ENCODE measurements at regions of chr5 and their contacts with region 1.

Region 1: DNA sequence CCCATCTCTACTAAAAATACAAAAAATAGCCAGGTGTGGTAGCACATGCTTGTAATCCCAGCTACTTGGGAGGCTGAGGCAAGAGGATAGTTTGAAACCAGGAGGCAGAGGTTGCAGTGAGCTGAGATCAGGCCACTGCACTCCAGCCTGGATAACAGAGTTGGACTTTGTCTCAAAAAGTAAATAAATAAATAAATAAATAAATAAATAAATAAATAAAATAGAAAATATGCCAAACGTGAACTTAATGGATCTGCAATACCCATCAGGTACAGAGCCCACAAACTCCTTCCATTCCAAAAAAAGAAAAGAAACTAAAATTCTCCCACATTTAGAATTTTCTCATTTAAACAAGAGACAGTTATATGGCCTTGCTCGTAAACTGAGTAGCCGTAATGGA is 702.7 kb downstream of the CDH18 start:
- DNase-seq: no peak
- ATAC-seq: no peak
- H3K4me3 ChIP-seq: no peak overlapping the region
- H3K27ac ChIP-seq: no peak overlapping the region
- H3K4me1 ChIP-seq: no peaks in the 10 kb centered on the region
- H3K27me3 ChIP-seq: no peaks in the 10 kb centered on the region
- CTCF ChIP-seq: no peak

Region 2: DNA sequence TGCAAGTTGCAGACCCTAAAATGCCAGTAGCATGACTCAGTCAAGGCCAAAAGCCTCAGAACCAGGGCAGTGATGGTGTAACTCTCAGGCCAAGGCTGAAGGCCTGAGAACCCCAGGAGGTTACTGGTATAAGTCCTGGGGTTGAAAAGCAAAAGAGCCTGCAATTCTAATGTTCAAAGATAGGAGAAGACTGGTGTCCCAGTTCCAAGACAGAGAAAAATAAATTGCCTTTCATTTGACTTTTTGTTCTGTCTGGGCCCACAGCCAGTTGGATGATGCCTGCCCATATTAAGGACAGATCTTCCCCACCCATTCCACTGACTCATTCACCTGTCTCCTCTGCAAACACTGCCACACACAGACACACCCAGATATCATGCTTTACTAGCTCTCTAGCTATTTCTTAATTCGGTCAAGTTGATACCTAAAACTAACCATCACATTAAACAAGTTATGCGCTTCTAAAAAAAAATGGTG is 29.6 kb after region 1 on chr5:
- CTCF ChIA-PET with region 1: interaction called, 17 read pairs
- POLR2A ChIA-PET with region 1: no interaction called
- intact Hi-C with region 1: no loop called
- DNase-seq: peak; percentile 97
- ATAC-seq: peak; percentile 98
- H3K4me3 ChIP-seq: no peak overlapping the region
- H3K27ac ChIP-seq: peak overlapping the region; percentile 62
- H3K4me1 ChIP-seq: peaks cover 20% of the 10 kb centered on the region
- H3K27me3 ChIP-seq: no peaks in the 10 kb centered on the region
- CTCF ChIP-seq: peak; percentile 54

Measured in PC-3 (cell line).